ENCODE measurements at regions of chr10 and their contacts with region 1.

Region 1: GRCh38 chr10:23095404-23095965 is at the start of gene MSRB2:
- DNase-seq: peak; percentile 34 to 70 (median 58)
- ATAC-seq: peak; percentile 83
- H3K4me3 ChIP-seq: peak within 1 kb of the TSS; percentile 66
- H3K4me3 Mint-ChIP-seq: peak within 1 kb of the TSS; percentile 85 to 100 (median 94)
- H3K27ac ChIP-seq: peak within 1 kb of the TSS; percentile 74
- H3K27ac Mint-ChIP-seq: peak within 1 kb of the TSS; percentile 84 to 97 (median 94)
- H3K4me1 ChIP-seq: peaks cover 13 to 20% of the 10 kb centered on the region in 2 donors
- H3K4me1 Mint-ChIP-seq: peaks cover 30 to 45% (median 43%) of the 10 kb centered on the region in 7 donors
- H3K27me3 ChIP-seq: no peaks in the 10 kb centered on the region
- H3K27me3 Mint-ChIP-seq: peaks cover 0 to 22% (median 0%) of the 10 kb centered on the region in 5 donors
- total RNA-seq, gene MSRB2: 4.7 to 11.9 (median 9.0) TPM

Region 2: GRCh38 chr10:22193945-22194344 is 901.5 kb before region 1 on chr10:
- CTCF ChIA-PET with region 1: no interaction called
- POLR2A ChIA-PET with region 1: no interaction called
- intact Hi-C with region 1: no loop called
- DNase-seq: no peak
- ATAC-seq: no peak
- H3K4me3 ChIP-seq: no peak overlapping the region
- H3K4me3 Mint-ChIP-seq: no peak overlapping the region
- H3K27ac ChIP-seq: no peak overlapping the region
- H3K27ac Mint-ChIP-seq: no peak overlapping the region
- H3K4me1 ChIP-seq: no peaks in the 10 kb centered on the region
- H3K4me1 Mint-ChIP-seq: no peaks in the 10 kb centered on the region
- H3K27me3 ChIP-seq: no peaks in the 10 kb centered on the region
- H3K27me3 Mint-ChIP-seq: peaks cover 0 to 13% (median 3%) of the 10 kb centered on the region in 5 donors

Region 3: DNA sequence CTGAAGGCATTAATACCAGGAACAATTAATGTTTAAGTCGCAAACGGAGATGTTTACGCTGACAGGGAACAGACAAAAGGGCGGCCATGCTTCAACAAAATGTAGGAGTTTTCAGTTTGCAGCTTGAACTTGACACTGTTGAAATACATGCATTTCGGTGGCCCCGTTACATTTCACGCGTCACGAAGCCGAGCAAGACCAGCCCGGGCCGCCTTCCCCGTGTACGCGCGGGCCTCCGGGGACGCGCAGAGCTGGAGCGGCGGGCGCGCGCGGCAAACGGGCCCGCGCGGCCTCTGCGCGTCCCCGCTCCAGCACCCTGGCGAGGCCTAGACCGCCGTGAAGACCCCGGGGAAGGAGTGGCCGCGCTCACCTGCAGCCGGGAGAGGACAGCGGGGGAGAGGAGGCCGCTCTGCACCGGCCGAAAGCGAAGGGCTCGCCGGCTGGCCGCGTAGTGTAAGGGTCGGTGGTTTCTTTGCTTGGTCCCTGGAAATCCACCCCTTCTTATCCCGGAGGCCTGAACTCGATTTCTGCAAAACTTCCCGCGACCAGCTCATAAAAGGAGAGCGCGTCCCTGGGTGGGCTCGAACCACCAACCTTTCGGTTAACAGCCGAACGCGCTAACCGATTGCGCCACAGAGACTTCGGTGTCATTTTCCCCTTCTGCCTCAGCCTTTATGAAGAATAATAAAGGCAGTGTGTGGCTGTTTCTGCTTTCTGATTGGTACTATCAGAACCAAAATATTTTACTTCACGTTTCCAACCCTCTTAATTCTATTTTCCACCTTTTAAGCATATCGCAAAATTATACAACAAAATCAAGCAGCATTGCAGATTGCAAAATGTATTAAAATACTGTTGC is 866.3 kb before region 1 on chr10:
- CTCF ChIA-PET with region 1: no interaction called
- POLR2A ChIA-PET with region 1: no interaction called
- intact Hi-C with region 1: loop called (anchors 1 to 2 kb)
- DNase-seq: peak; percentile 74 to 94 (median 92)
- ATAC-seq: peak; percentile 95
- H3K4me3 ChIP-seq: peak overlapping the region; percentile 85
- H3K4me3 Mint-ChIP-seq: peak overlapping the region; percentile 84 to 99 (median 94)
- H3K27ac ChIP-seq: peak overlapping the region; percentile 70
- H3K27ac Mint-ChIP-seq: peak overlapping the region; percentile 96 to 100 (median 99)
- H3K4me1 ChIP-seq: peaks cover 6 to 8% of the 10 kb centered on the region in 2 donors
- H3K4me1 Mint-ChIP-seq: peaks cover 11 to 27% (median 15%) of the 10 kb centered on the region in 7 donors
- H3K27me3 ChIP-seq: no peaks in the 10 kb centered on the region
- H3K27me3 Mint-ChIP-seq: peaks cover 0 to 20% (median 5%) of the 10 kb centered on the region in 5 donors

Region 4: GRCh38 chr10:22630234-22631174 is 465.0 kb before region 1 on chr10:
- CTCF ChIA-PET with region 1: no interaction called
- POLR2A ChIA-PET with region 1: no interaction called
- intact Hi-C with region 1: loop called in 1 of 2 experiments (anchors 10 kb)
- DNase-seq: peak in 6 of 9 donors; percentile 27 to 73 (median 38)
- ATAC-seq: peak; percentile 89
- H3K4me3 ChIP-seq: peak overlapping the region; percentile 37
- H3K4me3 Mint-ChIP-seq: peak overlapping the region; percentile 3 to 85 (median 72)
- H3K27ac ChIP-seq: peak overlapping the region; percentile 68
- H3K27ac Mint-ChIP-seq: peak overlapping the region; percentile 68 to 98 (median 90)
- H3K4me1 ChIP-seq: peaks cover 66 to 97% of the 10 kb centered on the region in 2 donors
- H3K4me1 Mint-ChIP-seq: peaks cover 65 to 100% (median 98%) of the 10 kb centered on the region in 7 donors
- H3K27me3 ChIP-seq: no peaks in the 10 kb centered on the region
- H3K27me3 Mint-ChIP-seq: no peaks in the 10 kb centered on the region

Region 5: GRCh38 chr10:22700489-22700888 is 395.0 kb before region 1 on chr10:
- CTCF ChIA-PET with region 1: no interaction called
- POLR2A ChIA-PET with region 1: no interaction called
- intact Hi-C with region 1: no loop called
- DNase-seq: no peak
- ATAC-seq: no peak
- H3K4me3 ChIP-seq: no peak overlapping the region
- H3K4me3 Mint-ChIP-seq: peak overlapping the region in 7 of 10 donors; percentile 10 to 70 (median 35)
- H3K27ac ChIP-seq: peak overlapping the region; percentile 5
- H3K27ac Mint-ChIP-seq: peak overlapping the region in 8 of 9 donors; percentile 44 to 91 (median 81)
- H3K4me1 ChIP-seq: peaks cover 48 to 81% of the 10 kb centered on the region in 2 donors
- H3K4me1 Mint-ChIP-seq: peaks cover 65 to 97% (median 94%) of the 10 kb centered on the region in 7 donors
- H3K27me3 ChIP-seq: no peaks in the 10 kb centered on the region
- H3K27me3 Mint-ChIP-seq: no peaks in the 10 kb centered on the region

Region 6: DNA sequence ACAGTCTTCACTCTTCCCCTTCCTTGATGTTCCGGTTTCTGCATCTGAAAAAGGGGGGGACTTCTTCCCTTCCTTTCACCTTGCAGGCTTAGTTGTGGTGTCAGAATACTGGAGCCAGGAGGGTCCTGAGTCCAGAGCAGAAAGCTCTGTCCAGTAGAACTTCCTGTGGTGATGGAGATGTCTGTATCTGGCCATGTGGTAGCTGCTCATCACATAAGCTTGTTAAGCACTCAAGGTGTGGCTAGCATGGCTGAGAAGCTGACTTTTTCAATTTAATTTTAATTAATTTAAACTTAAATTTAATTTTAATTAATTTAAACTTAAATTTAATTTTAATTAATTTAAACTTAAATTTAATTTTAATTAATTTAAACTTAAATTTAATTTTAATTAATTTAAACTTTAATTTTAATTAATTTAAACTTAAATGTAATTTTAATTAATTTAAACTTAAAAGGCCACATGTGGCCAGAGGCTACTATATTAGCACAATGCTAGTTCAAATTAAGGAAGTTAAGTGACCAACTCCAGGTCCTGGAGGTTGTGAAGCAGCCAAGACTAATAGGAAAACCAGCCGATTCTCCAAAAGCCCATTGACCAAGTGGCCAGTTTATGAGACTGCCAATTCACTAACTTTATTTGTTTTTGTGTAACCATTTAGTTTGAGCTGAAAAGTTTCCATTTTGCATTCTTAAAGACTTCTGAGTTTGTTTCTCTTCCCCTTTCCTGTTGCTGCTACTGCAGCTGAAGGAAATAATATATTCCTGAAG is 16.2 kb after region 1 on chr10:
- CTCF ChIA-PET with region 1: interaction called, 3 read pairs
- POLR2A ChIA-PET with region 1: no interaction called
- intact Hi-C with region 1: loop called in 1 of 2 experiments (anchors 1 kb)
- DNase-seq: no peak
- ATAC-seq: no peak
- H3K4me3 ChIP-seq: no peak overlapping the region
- H3K4me3 Mint-ChIP-seq: no peak overlapping the region
- H3K27ac ChIP-seq: no peak overlapping the region
- H3K27ac Mint-ChIP-seq: no peak overlapping the region
- H3K4me1 ChIP-seq: no peaks in the 10 kb centered on the region
- H3K4me1 Mint-ChIP-seq: peaks cover 0 to 9% (median 0%) of the 10 kb centered on the region in 7 donors
- H3K27me3 ChIP-seq: no peaks in the 10 kb centered on the region
- H3K27me3 Mint-ChIP-seq: no peaks in the 10 kb centered on the region

Region 7: GRCh38 chr10:23198940-23199767 is 103.7 kb after region 1 on chr10:
- CTCF ChIA-PET with region 1: no interaction called
- POLR2A ChIA-PET with region 1: no interaction called
- intact Hi-C with region 1: no loop called
- DNase-seq: no peak
- ATAC-seq: no peak
- H3K4me3 ChIP-seq: no peak overlapping the region
- H3K4me3 Mint-ChIP-seq: no peak overlapping the region
- H3K27ac ChIP-seq: no peak overlapping the region
- H3K27ac Mint-ChIP-seq: no peak overlapping the region
- H3K4me1 ChIP-seq: no peaks in the 10 kb centered on the region
- H3K4me1 Mint-ChIP-seq: peaks cover 0 to 13% (median 5%) of the 10 kb centered on the region in 7 donors
- H3K27me3 ChIP-seq: peaks cover 0 to 12% of the 10 kb centered on the region in 2 donors
- H3K27me3 Mint-ChIP-seq: peaks cover 63 to 90% (median 79%) of the 10 kb centered on the region in 5 donors

Region 8: DNA sequence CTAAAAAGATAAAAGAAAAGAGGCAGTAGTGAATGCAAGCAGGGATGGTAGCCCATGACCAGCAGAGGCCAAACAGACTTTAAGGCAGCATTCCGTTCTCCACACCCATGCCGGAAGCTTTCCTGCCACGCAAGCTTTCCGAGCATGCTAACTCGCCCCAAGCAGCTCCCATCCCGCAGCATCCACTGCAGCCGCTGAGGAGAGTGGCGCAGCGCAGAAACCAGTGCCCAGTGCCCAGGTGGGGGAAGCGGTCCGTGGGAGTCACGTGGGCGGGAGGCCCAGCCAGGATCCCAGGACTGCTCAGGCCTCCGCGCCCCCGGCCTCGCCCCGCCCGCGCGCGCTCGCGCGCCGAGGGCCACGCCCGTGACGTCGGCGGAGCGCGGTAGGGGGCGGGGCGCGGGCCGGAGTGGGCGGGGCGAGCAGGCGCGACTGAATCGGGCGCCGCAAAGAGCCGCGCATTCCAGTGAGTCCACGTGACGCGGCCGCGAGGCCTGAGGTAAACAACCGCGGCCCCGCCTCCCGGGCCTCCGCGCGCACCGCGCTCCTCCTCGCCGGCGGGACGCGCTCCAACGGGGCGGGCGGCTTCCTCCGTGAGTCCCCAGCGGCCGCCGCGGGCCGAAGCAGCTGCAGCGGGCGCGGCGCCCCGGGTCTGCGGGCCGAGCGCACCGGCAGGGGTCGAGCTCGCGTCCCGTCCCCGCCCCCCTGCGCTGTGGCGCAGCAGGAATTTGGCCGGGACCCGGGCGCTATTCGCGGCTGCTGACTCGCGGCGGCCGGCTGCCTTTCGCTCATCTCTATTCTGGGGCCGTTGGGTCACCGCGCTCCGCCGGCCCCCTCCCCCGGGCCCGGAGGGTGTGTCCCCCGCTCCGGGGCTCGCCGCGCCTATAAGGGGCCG is 343.3 kb after region 1 on chr10 and contains the start of gene OTUD1:
- CTCF ChIA-PET with region 1: no interaction called
- POLR2A ChIA-PET with region 1: no interaction called
- intact Hi-C with region 1: loop called (anchors 1 kb)
- DNase-seq: peak; percentile 89 to 99 (median 95)
- ATAC-seq: peak; percentile 96
- H3K4me3 ChIP-seq: peak within 1 kb of the TSS; percentile 96
- H3K4me3 Mint-ChIP-seq: peak within 1 kb of the TSS; percentile 81 to 99 (median 90)
- H3K27ac ChIP-seq: peak within 1 kb of the TSS; percentile 92
- H3K27ac Mint-ChIP-seq: peak within 1 kb of the TSS; percentile 89 to 96 (median 94)
- H3K4me1 ChIP-seq: peaks cover 27 to 29% of the 10 kb centered on the region in 2 donors
- H3K4me1 Mint-ChIP-seq: peaks cover 28 to 44% (median 39%) of the 10 kb centered on the region in 7 donors
- H3K27me3 ChIP-seq: no peaks in the 10 kb centered on the region
- H3K27me3 Mint-ChIP-seq: peaks cover 0 to 8% (median 0%) of the 10 kb centered on the region in 5 donors
- total RNA-seq, gene OTUD1: 20.7 to 118 (median 44.5) TPM

Region 9: DNA sequence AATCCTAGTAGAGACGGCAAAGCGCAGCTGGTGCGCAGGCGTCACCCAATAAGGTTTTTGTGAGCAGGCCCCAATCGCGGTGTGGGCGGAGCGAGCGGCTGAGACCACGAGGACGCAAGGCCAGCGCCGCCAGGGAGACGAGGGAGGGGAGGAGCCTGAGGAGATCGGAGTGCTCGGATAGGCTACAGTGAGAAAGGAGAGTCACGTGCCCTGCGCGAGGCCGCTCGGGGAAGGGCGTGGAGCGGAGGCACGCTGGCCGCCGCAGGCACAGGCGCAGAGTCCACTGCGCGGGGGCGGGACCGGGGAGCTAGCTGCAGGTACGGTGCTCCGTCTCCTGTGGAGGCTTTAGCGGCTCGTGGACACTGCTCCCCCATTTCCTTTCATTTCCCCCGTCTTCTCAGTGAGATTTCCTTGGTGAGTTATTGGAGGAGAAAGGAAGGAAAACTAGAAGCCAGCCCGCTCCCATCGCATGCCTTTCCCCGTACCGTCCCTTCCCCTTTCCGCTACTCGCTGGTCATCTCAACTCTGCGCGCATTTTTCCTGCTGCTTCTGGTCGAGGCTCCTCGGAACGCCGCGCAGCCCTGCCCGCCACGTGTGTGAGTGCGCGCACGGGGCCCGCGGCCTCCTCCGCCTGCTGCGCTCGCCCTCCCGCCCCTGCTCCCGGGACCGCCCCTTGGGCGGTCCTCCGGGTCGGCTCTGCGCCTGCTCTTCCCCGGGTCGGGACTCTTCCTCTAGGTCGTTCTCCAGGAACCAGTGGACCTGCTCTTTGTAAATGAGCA is 1921.1 kb after region 1 on chr10 and contains the start of gene THNSL1:
- CTCF ChIA-PET with region 1: no interaction called
- POLR2A ChIA-PET with region 1: no interaction called
- intact Hi-C with region 1: loop called in 1 of 2 experiments (anchors 2 kb)
- DNase-seq: peak; percentile 90 to 99 (median 96)
- ATAC-seq: peak; percentile 97
- H3K4me3 ChIP-seq: peak within 1 kb of the TSS; percentile 76
- H3K4me3 Mint-ChIP-seq: peak within 1 kb of the TSS; percentile 87 to 98 (median 90)
- H3K27ac ChIP-seq: peak within 1 kb of the TSS; percentile 82
- H3K27ac Mint-ChIP-seq: peak within 1 kb of the TSS; percentile 91 to 99 (median 94)
- H3K4me1 ChIP-seq: peaks cover 0 to 8% of the 10 kb centered on the region in 2 donors
- H3K4me1 Mint-ChIP-seq: peaks cover 11 to 43% (median 32%) of the 10 kb centered on the region in 7 donors
- H3K27me3 ChIP-seq: no peaks in the 10 kb centered on the region
- H3K27me3 Mint-ChIP-seq: peaks cover 0 to 10% (median 0%) of the 10 kb centered on the region in 5 donors
- total RNA-seq, gene THNSL1: 1.4 to 10.6 (median 2.5) TPM

Measured in naive thymus-derived CD4-positive, alpha-beta T cell (primary cell).